ENCODE measurements at regions of chr1 and their contacts with region 1.

Region 1: GRCh38 chr1:213761845-213762407 is 225.8 kb upstream of the PROX1 start:
- DNase-seq: peak in 32 of 35 experiments; percentile 1 to 65 (median 29)
- ATAC-seq: peak; percentile 98 to 100 (median 100)
- H3K4me3 ChIP-seq: no peak overlapping the region
- H3K4me3 Mint-ChIP-seq: peak overlapping the region; percentile 25 to 64 (median 53)
- H3K27ac ChIP-seq: no peak overlapping the region
- H3K27ac Mint-ChIP-seq: peak overlapping the region; percentile 80 to 85
- H3K4me1 ChIP-seq: peaks cover 11 to 12% of the 10 kb centered on the region in 2 experiments
- H3K4me1 Mint-ChIP-seq: peaks cover 12 to 20% (median 12%) of the 10 kb centered on the region in 3 donors
- H3K27me3 ChIP-seq: no peaks in the 10 kb centered on the region
- H3K27me3 Mint-ChIP-seq: no peaks in the 10 kb centered on the region

Region 2: DNA sequence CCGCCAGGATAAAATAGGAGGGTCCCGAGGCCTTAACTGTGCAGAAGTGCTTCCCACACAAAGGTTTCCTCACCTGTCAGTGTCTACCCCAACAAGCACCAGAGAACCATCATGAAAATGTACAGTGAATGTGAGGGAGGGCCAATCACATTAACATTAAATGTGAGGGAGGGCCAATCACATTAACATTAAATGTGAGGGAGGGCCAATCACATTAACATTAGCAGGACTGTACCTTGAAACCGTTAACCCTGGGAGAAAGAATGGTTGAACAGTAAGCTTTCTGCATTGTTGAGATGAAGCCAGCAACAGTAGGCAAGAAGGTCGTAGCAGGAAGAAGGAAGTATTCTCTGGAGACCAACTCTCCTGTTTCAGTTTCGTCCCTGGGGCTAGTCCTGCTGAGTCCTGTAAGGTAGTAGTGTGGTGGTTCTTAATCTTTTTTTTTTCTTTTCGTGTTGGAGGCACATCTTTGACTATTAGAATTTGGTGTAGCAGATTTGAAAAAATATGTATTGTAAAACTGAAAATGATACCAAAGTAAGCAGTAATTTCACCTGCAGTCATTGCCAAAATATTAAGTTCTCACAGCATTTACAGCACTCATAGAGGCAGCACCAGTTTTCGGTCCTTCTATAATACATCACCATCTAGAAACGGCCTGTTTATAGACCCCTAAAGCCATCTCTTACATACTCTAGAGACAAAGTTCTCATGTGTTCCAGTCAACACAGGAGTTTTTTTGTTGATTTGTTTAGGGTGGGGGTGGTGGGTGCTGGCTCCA is 1575.3 kb before region 1 on chr1:
- CTCF ChIA-PET with region 1: no interaction called
- POLR2A ChIA-PET with region 1: interaction called in 1 of 2 experiments, 11 read pairs
- DNase-seq: peak in 2 of 35 experiments; percentile 7 to 12
- ATAC-seq: peak in 3 of 4 experiments; percentile 63 to 72 (median 70)
- H3K4me3 ChIP-seq: peak overlapping the region; percentile 4 to 19
- H3K4me3 Mint-ChIP-seq: peak overlapping the region; percentile 61 to 70 (median 66)
- H3K27ac ChIP-seq: peak overlapping the region; percentile 33
- H3K27ac Mint-ChIP-seq: peak overlapping the region; percentile 81 to 90
- H3K4me1 ChIP-seq: peaks cover 7 to 14% of the 10 kb centered on the region in 2 experiments
- H3K4me1 Mint-ChIP-seq: peaks cover 25 to 35% (median 31%) of the 10 kb centered on the region in 3 donors
- H3K27me3 ChIP-seq: no peaks in the 10 kb centered on the region
- H3K27me3 Mint-ChIP-seq: no peaks in the 10 kb centered on the region

Region 3: GRCh38 chr1:213783893-213784292 is 22.0 kb after region 1 on chr1:
- CTCF ChIA-PET with region 1: no interaction called
- POLR2A ChIA-PET with region 1: no interaction called
- DNase-seq: peak in 10 of 35 experiments; percentile 1 to 44 (median 6)
- ATAC-seq: peak; percentile 58 to 87 (median 79)
- H3K4me3 ChIP-seq: no peak overlapping the region
- H3K4me3 Mint-ChIP-seq: peak overlapping the region in 1 of 3 donors; percentile 47
- H3K27ac ChIP-seq: no peak overlapping the region
- H3K27ac Mint-ChIP-seq: no peak overlapping the region
- H3K4me1 ChIP-seq: peaks cover 11 to 16% of the 10 kb centered on the region in 2 experiments
- H3K4me1 Mint-ChIP-seq: peaks cover 4 to 25% (median 16%) of the 10 kb centered on the region in 3 donors
- H3K27me3 ChIP-seq: no peaks in the 10 kb centered on the region
- H3K27me3 Mint-ChIP-seq: peaks cover 0 to 8% of the 10 kb centered on the region in 2 donors

Region 4: GRCh38 chr1:214102907-214103306 is 341.0 kb after region 1 on chr1:
- CTCF ChIA-PET with region 1: no interaction called
- POLR2A ChIA-PET with region 1: no interaction called
- DNase-seq: no peak
- ATAC-seq: no peak
- H3K4me3 ChIP-seq: no peak overlapping the region
- H3K4me3 Mint-ChIP-seq: no peak overlapping the region
- H3K27ac ChIP-seq: no peak overlapping the region
- H3K27ac Mint-ChIP-seq: no peak overlapping the region
- H3K4me1 ChIP-seq: no peaks in the 10 kb centered on the region
- H3K4me1 Mint-ChIP-seq: peaks cover 0 to 3% (median 2%) of the 10 kb centered on the region in 3 donors
- H3K27me3 ChIP-seq: peaks cover 0 to 7% of the 10 kb centered on the region in 2 experiments
- H3K27me3 Mint-ChIP-seq: peaks cover 0 to 4% of the 10 kb centered on the region in 2 donors